ENCODE measurements at regions of chr3 and their contacts with region 1.

Region 1: GRCh38 chr3:36957862-36958686 is 13.2 kb upstream of the TRANK1 start:
- DNase-seq: no peak
- ATAC-seq: no peak
- H3K4me3 Mint-ChIP-seq: no peak overlapping the region
- H3K27ac Mint-ChIP-seq: peak overlapping the region; percentile 33
- H3K4me1 Mint-ChIP-seq: peaks cover 20% of the 10 kb centered on the region
- H3K27me3 Mint-ChIP-seq: no peaks in the 10 kb centered on the region
- CTCF ChIP-seq: no peak

Region 2: DNA sequence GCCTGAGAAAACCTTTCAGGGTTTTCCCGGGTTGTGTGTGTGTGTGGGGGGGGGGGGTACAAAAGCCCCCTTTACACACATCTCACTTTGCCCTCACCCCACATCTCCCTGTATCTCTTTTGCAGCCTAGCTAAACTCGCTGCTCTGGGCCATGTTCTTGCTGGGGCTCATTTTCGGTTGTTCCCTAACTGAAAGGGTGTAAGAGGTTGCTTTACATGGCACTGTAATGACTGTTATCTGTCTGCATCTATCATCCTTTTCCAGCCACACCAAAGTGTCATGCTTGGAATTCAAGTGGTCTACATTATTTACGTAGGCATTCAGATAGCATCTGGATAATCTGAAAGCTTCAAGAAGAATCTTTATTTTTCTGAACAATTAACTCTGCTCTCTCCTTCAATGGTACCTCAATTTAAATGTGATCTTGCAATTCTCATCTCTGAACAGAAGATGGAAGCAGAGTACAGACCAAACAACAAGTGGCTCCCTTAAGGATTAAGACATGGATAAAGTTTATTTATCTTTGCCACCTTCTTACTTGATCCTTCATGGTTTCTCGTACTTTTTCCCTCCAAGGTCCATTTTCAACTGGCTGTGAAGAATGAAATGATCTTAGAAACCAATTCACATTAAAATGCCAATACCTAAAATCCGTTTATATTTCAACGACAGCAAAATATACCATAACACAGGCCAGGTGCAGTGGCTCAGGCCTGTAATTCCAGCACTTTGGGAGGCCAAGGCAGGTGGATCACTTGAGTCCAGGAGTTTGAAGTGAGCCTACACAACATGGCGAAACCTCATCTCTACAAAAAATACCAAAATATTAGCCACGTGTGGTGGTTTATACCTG is 228.6 kb before region 1 on chr3:
- CTCF ChIA-PET with region 1: interaction called, 6 read pairs
- POLR2A ChIA-PET with region 1: no interaction called
- intact Hi-C with region 1: loop called (anchors 1 kb)
- DNase-seq: no peak
- ATAC-seq: no peak
- H3K4me3 Mint-ChIP-seq: no peak overlapping the region
- H3K27ac Mint-ChIP-seq: no peak overlapping the region
- H3K4me1 Mint-ChIP-seq: no peaks in the 10 kb centered on the region
- H3K27me3 Mint-ChIP-seq: peaks cover 6% of the 10 kb centered on the region
- CTCF ChIP-seq: no peak

Region 3: GRCh38 chr3:36852071-36852470 is 106.0 kb before region 1 on chr3:
- CTCF ChIA-PET with region 1: interaction called, 13 read pairs
- POLR2A ChIA-PET with region 1: no interaction called
- intact Hi-C with region 1: no loop called
- DNase-seq: no peak
- ATAC-seq: no peak
- H3K4me3 Mint-ChIP-seq: no peak overlapping the region
- H3K27ac Mint-ChIP-seq: no peak overlapping the region
- H3K4me1 Mint-ChIP-seq: peaks cover 4% of the 10 kb centered on the region
- H3K27me3 Mint-ChIP-seq: no peaks in the 10 kb centered on the region
- CTCF ChIP-seq: no peak

Region 4: GRCh38 chr3:36893137-36893557 is 64.9 kb before region 1 on chr3:
- CTCF ChIA-PET with region 1: interaction called, 36 read pairs
- POLR2A ChIA-PET with region 1: interaction called, 15 read pairs
- intact Hi-C with region 1: loop called (anchors 1 kb)
- DNase-seq: no peak
- ATAC-seq: peak; percentile 35
- H3K4me3 Mint-ChIP-seq: peak overlapping the region; percentile 78
- H3K27ac Mint-ChIP-seq: peak overlapping the region; percentile 97
- H3K4me1 Mint-ChIP-seq: peaks cover 94% of the 10 kb centered on the region
- H3K27me3 Mint-ChIP-seq: no peaks in the 10 kb centered on the region
- CTCF ChIP-seq: no peak

Region 5: DNA sequence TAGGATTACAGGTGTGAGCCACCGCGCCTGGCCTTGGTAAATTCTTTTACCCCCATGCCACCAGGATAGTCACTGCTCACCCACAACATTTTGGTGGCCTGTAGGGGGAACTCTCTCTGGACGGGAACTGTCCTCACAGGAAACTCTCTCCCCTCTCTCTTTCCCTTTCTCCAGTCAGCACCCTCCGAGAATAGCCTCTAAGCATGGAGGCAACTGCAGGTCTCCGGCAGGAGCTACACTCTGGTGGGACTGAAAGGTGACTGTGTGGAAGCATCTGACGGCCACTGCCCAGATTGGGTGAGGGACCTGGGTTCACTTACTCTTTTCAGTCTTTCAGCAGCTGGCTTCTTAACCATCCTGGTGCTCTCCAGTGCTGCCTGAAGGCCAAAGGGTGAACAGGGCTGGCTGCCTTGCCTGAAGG is 34.5 kb before region 1 on chr3:
- CTCF ChIA-PET with region 1: interaction called, 6 read pairs
- POLR2A ChIA-PET with region 1: interaction called, 4 read pairs
- intact Hi-C with region 1: loop called (anchors 1 kb)
- DNase-seq: no peak
- ATAC-seq: no peak
- H3K4me3 Mint-ChIP-seq: peak overlapping the region; percentile 85
- H3K27ac Mint-ChIP-seq: peak overlapping the region; percentile 87
- H3K4me1 Mint-ChIP-seq: peaks cover 60% of the 10 kb centered on the region
- H3K27me3 Mint-ChIP-seq: no peaks in the 10 kb centered on the region
- CTCF ChIP-seq: no peak

Region 6: DNA sequence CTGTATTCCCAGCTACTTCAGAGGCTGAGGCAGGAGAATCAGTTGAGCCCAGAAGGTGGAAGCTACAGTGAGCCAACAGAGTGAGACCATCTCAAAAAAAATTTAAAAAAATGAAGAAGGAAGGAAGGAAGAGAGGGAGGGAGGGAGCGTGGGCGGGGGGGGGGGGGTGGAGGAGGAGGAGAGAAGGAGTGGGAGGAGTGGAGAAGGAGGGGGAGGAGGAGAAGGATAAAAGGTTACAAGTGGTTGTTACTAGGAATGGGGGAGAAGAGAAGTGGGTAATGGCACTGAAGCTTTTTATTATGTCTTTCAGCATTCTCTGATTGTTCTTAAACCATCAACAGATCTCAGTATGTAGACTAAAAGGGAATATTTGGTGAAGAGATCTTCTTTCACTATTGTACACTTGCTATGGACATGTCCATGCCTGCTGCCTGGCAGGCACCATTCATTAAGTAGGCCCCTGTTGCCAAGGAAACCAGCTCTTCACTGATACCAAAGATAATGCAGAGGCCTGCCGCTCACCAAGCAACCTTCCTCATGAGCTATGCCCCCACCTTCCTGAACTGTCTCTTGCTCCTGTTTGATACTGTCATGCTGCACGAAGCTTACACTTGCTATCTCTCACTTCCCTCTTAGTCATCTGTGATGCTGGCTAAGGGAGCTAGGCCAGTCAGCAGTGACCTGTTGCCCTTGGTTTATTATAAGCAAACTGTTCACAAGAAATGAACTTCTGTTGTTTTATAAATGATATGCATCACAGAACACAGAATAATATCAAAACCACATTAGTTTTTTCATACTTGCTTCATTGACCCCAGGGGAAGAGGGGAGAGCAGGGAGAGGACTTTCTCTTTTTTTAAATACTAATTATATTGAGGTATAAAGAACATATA is 11.7 kb after region 1 on chr3:
- CTCF ChIA-PET with region 1: interaction called, 25 read pairs
- POLR2A ChIA-PET with region 1: interaction called, 14 read pairs
- intact Hi-C with region 1: loop called (anchors 1 kb)
- DNase-seq: peak; percentile 26
- ATAC-seq: peak; percentile 99
- H3K4me3 Mint-ChIP-seq: peak overlapping the region; percentile 39
- H3K27ac Mint-ChIP-seq: peak overlapping the region; percentile 93
- H3K4me1 Mint-ChIP-seq: peaks cover 30% of the 10 kb centered on the region
- H3K27me3 Mint-ChIP-seq: no peaks in the 10 kb centered on the region
- CTCF ChIP-seq: no peak

Measured in activated B cell treated with CpG ODN at 0.5 μM for 24 hours (primary cell).